Right lobe of liver (tissue), 6 donors: ENCODE measurements at regions of chr2 and their contacts with region 1.

Region 1: GRCh38 chr2:24382363-24383073 is 22.2 kb upstream of the ITSN2 start:
- DNase-seq: peak in 2 of 3 donors; percentile 41 to 58
- ATAC-seq: peak; percentile 90 to 96 (median 93)
- H3K4me3 ChIP-seq: no peak overlapping the region
- H3K27ac ChIP-seq: no peak overlapping the region
- H3K4me1 ChIP-seq: no peaks in the 10 kb centered on the region
- H3K27me3 ChIP-seq: no peaks in the 10 kb centered on the region
- CTCF ChIP-seq: peak; percentile 46 to 82 (median 75)
- POLR2A ChIP-seq: no peak

Region 2: DNA sequence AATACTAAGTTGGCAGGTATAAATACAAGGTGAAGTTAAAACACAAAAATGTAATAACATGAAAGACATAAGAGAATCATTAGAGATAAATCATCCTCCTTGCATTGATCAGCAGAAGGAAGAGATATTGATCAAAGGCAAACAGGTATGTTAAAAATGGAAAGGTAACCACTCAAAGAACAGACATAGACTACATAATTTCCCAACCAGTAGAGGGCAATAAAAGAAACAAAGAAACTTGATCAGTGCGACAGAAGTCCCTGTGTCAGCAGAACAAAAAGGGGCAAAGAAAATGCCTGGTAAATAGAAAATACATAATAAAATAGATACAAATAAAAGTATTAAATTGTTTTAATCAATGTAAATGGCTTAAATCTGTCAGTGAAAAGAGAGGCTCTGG is 154.0 kb before region 1 on chr2:
- intact Hi-C with region 1: loop called in 1 of 2 experiments (anchors 10 kb)
- DNase-seq: no peak
- ATAC-seq: peak; percentile 59 to 76 (median 65)
- H3K4me3 ChIP-seq: no peak overlapping the region
- H3K27ac ChIP-seq: no peak overlapping the region
- H3K4me1 ChIP-seq: no peaks in the 10 kb centered on the region
- H3K27me3 ChIP-seq: no peaks in the 10 kb centered on the region
- CTCF ChIP-seq: peak; percentile 44 to 53 (median 50)
- POLR2A ChIP-seq: no peak

Region 3: GRCh38 chr2:24635181-24635580 is 252.7 kb after region 1 on chr2:
- intact Hi-C with region 1: no loop called
- DNase-seq: no peak
- ATAC-seq: no peak
- H3K4me3 ChIP-seq: no peak overlapping the region
- H3K27ac ChIP-seq: no peak overlapping the region
- H3K4me1 ChIP-seq: peaks cover 0 to 4% (median 0%) of the 10 kb centered on the region in 4 donors
- H3K27me3 ChIP-seq: no peaks in the 10 kb centered on the region
- CTCF ChIP-seq: no peak
- POLR2A ChIP-seq: no peak